CD4-positive, alpha-beta T cell (primary cell): ENCODE measurements at regions of chr22 and their contacts with region 1.

Region 1: GRCh38 chr22:19629720-19630419 is 84.4 kb upstream of the SEPTIN5 start:
- DNase-seq: peak; percentile 78 to 91 (median 86)
- ATAC-seq: peak; percentile 99
- H3K4me3 ChIP-seq: no peak overlapping the region
- H3K4me3 Mint-ChIP-seq: no peak overlapping the region
- H3K27ac ChIP-seq: no peak overlapping the region
- H3K27ac Mint-ChIP-seq: no peak overlapping the region
- H3K4me1 ChIP-seq: peaks cover 7% of the 10 kb centered on the region
- H3K4me1 Mint-ChIP-seq: peaks cover 6% of the 10 kb centered on the region
- H3K27me3 ChIP-seq: no peaks in the 10 kb centered on the region
- H3K27me3 Mint-ChIP-seq: no peaks in the 10 kb centered on the region
- CTCF ChIP-seq: peak; percentile 91

Region 2: GRCh38 chr22:19143967-19144400 is 485.9 kb before region 1 on chr22:
- CTCF ChIA-PET with region 1: interaction called, 13 read pairs
- POLR2A ChIA-PET with region 1: interaction called, 5 read pairs
- intact Hi-C with region 1: loop called (anchors 1 to 2 kb)
- DNase-seq: peak in 7 of 14 experiments; percentile 13 to 66 (median 25)
- ATAC-seq: peak; percentile 16
- H3K4me3 ChIP-seq: peak overlapping the region; percentile 90
- H3K4me3 Mint-ChIP-seq: peak overlapping the region; percentile 97
- H3K27ac ChIP-seq: peak overlapping the region; percentile 81 to 86
- H3K27ac Mint-ChIP-seq: peak overlapping the region; percentile 94
- H3K4me1 ChIP-seq: peaks cover 23% of the 10 kb centered on the region
- H3K4me1 Mint-ChIP-seq: peaks cover 22% of the 10 kb centered on the region
- H3K27me3 ChIP-seq: peaks cover 10 to 16% of the 10 kb centered on the region in 2 experiments
- H3K27me3 Mint-ChIP-seq: peaks cover 16% of the 10 kb centered on the region
- CTCF ChIP-seq: no peak

Region 3: GRCh38 chr22:19407649-19408606 is 221.9 kb before region 1 on chr22:
- CTCF ChIA-PET with region 1: no interaction called
- POLR2A ChIA-PET with region 1: no interaction called
- intact Hi-C with region 1: loop called in 1 of 2 experiments (anchors 10 kb)
- DNase-seq: peak in 1 of 14 experiments; percentile 20
- ATAC-seq: no peak
- H3K4me3 ChIP-seq: no peak overlapping the region
- H3K4me3 Mint-ChIP-seq: no peak overlapping the region
- H3K27ac ChIP-seq: no peak overlapping the region
- H3K27ac Mint-ChIP-seq: no peak overlapping the region
- H3K4me1 ChIP-seq: peaks cover 6% of the 10 kb centered on the region
- H3K4me1 Mint-ChIP-seq: peaks cover 19% of the 10 kb centered on the region
- H3K27me3 ChIP-seq: no peaks in the 10 kb centered on the region
- H3K27me3 Mint-ChIP-seq: no peaks in the 10 kb centered on the region
- CTCF ChIP-seq: no peak

Region 4: GRCh38 chr22:19514831-19515565 is 114.9 kb before region 1 on chr22:
- CTCF ChIA-PET with region 1: no interaction called
- POLR2A ChIA-PET with region 1: no interaction called
- intact Hi-C with region 1: no loop called
- DNase-seq: no peak
- ATAC-seq: no peak
- H3K4me3 ChIP-seq: no peak overlapping the region
- H3K4me3 Mint-ChIP-seq: no peak overlapping the region
- H3K27ac ChIP-seq: no peak overlapping the region
- H3K27ac Mint-ChIP-seq: no peak overlapping the region
- H3K4me1 ChIP-seq: no peaks in the 10 kb centered on the region
- H3K4me1 Mint-ChIP-seq: peaks cover 4% of the 10 kb centered on the region
- H3K27me3 ChIP-seq: no peaks in the 10 kb centered on the region
- H3K27me3 Mint-ChIP-seq: no peaks in the 10 kb centered on the region
- CTCF ChIP-seq: no peak

Region 5: DNA sequence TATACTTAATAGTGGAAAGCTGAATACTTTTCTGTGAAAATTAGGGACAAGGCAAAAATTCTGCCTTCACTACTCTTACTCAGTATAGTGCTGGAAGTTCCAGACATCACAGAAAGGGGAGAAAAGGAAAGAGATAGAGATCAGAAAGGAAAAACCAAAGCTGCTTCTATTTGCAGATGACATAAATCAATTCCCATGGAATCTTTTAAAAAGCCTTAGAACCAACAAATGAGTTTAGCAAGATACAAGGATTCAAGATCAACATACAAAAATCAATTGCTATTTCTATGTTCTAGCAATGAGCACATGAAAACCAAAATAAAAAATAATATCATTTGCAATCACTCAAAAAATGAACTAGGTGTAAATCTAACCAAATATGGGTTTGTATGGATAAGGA is 89.5 kb before region 1 on chr22:
- CTCF ChIA-PET with region 1: no interaction called
- POLR2A ChIA-PET with region 1: no interaction called
- intact Hi-C with region 1: no loop called
- DNase-seq: no peak
- ATAC-seq: no peak
- H3K4me3 ChIP-seq: no peak overlapping the region
- H3K4me3 Mint-ChIP-seq: no peak overlapping the region
- H3K27ac ChIP-seq: no peak overlapping the region
- H3K27ac Mint-ChIP-seq: no peak overlapping the region
- H3K4me1 ChIP-seq: no peaks in the 10 kb centered on the region
- H3K4me1 Mint-ChIP-seq: no peaks in the 10 kb centered on the region
- H3K27me3 ChIP-seq: peaks cover 0 to 2% of the 10 kb centered on the region in 2 experiments
- H3K27me3 Mint-ChIP-seq: no peaks in the 10 kb centered on the region
- CTCF ChIP-seq: no peak

Region 6: GRCh38 chr22:19559956-19560355 is 69.9 kb before region 1 on chr22:
- CTCF ChIA-PET with region 1: no interaction called
- POLR2A ChIA-PET with region 1: no interaction called
- intact Hi-C with region 1: loop called in 1 of 2 experiments (anchors 5 kb)
- DNase-seq: no peak
- ATAC-seq: no peak
- H3K4me3 ChIP-seq: no peak overlapping the region
- H3K4me3 Mint-ChIP-seq: no peak overlapping the region
- H3K27ac ChIP-seq: no peak overlapping the region
- H3K27ac Mint-ChIP-seq: no peak overlapping the region
- H3K4me1 ChIP-seq: no peaks in the 10 kb centered on the region
- H3K4me1 Mint-ChIP-seq: no peaks in the 10 kb centered on the region
- H3K27me3 ChIP-seq: no peaks in the 10 kb centered on the region
- H3K27me3 Mint-ChIP-seq: no peaks in the 10 kb centered on the region
- CTCF ChIP-seq: no peak

Region 7: GRCh38 chr22:19598054-19598855 is 31.6 kb before region 1 on chr22:
- CTCF ChIA-PET with region 1: interaction called, 6 read pairs
- POLR2A ChIA-PET with region 1: interaction called, 12 read pairs
- intact Hi-C with region 1: loop called in 1 of 2 experiments (anchors 1 kb)
- DNase-seq: peak in 9 of 14 experiments; percentile 18 to 48 (median 42)
- ATAC-seq: peak; percentile 30
- H3K4me3 ChIP-seq: peak overlapping the region; percentile 0
- H3K4me3 Mint-ChIP-seq: peak overlapping the region; percentile 57
- H3K27ac ChIP-seq: peak overlapping the region; percentile 74 to 87
- H3K27ac Mint-ChIP-seq: peak overlapping the region; percentile 93
- H3K4me1 ChIP-seq: peaks cover 51% of the 10 kb centered on the region
- H3K4me1 Mint-ChIP-seq: peaks cover 76% of the 10 kb centered on the region
- H3K27me3 ChIP-seq: no peaks in the 10 kb centered on the region
- H3K27me3 Mint-ChIP-seq: no peaks in the 10 kb centered on the region
- CTCF ChIP-seq: no peak

Region 8: GRCh38 chr22:19641254-19641982 is 11.5 kb after region 1 on chr22:
- CTCF ChIA-PET with region 1: no interaction called
- POLR2A ChIA-PET with region 1: no interaction called
- intact Hi-C with region 1: no loop called
- DNase-seq: no peak
- ATAC-seq: no peak
- H3K4me3 ChIP-seq: no peak overlapping the region
- H3K4me3 Mint-ChIP-seq: no peak overlapping the region
- H3K27ac ChIP-seq: no peak overlapping the region
- H3K27ac Mint-ChIP-seq: no peak overlapping the region
- H3K4me1 ChIP-seq: no peaks in the 10 kb centered on the region
- H3K4me1 Mint-ChIP-seq: no peaks in the 10 kb centered on the region
- H3K27me3 ChIP-seq: peaks cover 6 to 15% of the 10 kb centered on the region in 2 experiments
- H3K27me3 Mint-ChIP-seq: peaks cover 20% of the 10 kb centered on the region
- CTCF ChIP-seq: no peak